ENCODE measurements at regions of chr17 and their contacts with region 1.

Region 1: GRCh38 chr17:44384823-44385286 is 4.6 kb downstream of the ITGA2B start:
- DNase-seq: no peak
- ATAC-seq: no peak
- H3K4me3 ChIP-seq: peak overlapping the region; percentile 82
- H3K27ac ChIP-seq: no peak overlapping the region
- H3K4me1 ChIP-seq: peaks cover 10% of the 10 kb centered on the region
- H3K27me3 ChIP-seq: no peaks in the 10 kb centered on the region
- CTCF ChIP-seq: no peak

Region 2: DNA sequence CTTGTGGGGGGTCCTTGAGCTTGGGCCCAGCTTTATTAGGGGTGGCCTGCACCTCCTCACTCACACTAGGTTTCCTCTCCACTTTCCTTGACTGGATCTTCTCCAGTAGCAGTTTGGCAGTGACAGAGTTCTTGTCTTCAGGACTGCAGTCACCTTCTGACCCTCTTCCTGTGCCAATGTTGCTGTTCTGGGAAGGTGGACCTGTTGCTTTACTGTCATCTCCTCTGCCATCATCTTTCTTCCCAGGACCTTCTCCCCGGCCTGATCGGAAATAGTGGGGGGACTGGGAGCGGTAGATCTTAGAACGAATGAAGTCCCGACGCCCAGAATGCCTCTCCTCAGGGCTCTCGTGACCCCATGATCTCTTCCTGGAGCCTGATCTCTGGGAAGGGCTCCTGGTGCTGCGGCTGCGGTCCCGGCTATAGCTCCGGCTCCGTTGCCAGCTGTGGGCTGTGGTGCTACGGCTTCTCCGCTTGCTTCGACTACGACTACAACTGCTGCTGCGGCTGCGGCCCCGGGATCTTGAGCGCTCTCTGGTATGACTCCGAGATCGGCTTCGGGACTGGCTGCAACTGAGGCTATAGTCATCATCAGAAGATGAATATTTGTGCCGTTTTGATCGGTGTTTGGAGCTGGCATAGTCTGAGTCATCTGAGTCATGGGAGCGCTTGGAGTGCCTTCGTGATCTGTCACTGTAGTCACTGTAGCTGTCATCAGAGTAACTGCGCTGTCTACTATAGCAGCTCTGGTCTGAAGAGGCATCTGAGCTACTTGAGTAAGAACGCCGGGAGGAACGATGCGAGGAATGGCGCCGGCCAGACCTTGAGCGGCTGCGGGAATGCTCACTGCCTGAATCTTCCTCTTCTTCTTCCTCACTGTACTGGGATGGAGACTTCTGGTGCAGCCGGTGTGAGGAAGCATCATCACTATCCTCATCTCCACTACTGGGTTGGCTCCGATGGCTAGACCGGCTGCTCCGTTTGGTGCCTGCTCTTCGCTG is 14.1 kb after region 1 on chr17:
- CTCF ChIA-PET with region 1: no interaction called
- POLR2A ChIA-PET with region 1: no interaction called
- intact Hi-C with region 1: no loop called
- DNase-seq: no peak
- ATAC-seq: no peak
- H3K4me3 ChIP-seq: no peak overlapping the region
- H3K27ac ChIP-seq: no peak overlapping the region
- H3K4me1 ChIP-seq: no peaks in the 10 kb centered on the region
- H3K27me3 ChIP-seq: no peaks in the 10 kb centered on the region
- CTCF ChIP-seq: no peak

Region 3: DNA sequence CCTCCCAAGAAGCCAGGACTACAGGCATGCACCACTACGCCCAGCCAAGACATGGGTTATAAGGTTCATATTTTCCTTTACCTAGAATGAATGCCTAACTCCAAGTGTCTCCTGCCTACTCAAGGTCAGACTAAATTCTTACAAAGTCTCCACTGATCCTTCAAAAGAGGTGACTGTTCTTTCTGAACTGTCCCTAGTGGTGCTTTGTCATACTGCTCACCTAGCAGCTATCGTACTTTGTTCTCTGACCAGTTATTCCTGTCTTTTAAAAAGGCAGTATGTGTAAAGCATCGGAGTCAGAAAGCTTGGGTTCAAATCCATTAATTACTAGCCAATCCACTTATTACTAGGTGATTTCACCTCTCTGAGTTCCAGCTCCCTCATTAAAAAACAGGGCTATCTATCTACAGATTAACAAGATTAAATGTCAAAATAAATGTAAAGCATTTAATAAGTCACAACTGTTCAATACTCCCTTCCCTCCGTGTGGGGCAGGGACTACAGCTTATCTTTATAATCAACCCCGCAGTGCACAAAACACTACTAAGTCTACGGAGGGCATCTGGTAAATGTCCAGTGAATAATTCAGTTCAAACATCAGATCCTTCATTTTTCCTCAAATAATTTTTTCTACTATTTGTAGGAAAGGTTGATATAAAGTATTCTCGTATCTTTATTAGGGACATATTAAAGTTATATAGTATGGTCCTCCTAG is 24.6 kb after region 1 on chr17:
- CTCF ChIA-PET with region 1: no interaction called
- POLR2A ChIA-PET with region 1: interaction called, 12 read pairs
- intact Hi-C with region 1: no loop called
- DNase-seq: peak; percentile 9
- ATAC-seq: no peak
- H3K4me3 ChIP-seq: no peak overlapping the region
- H3K27ac ChIP-seq: no peak overlapping the region
- H3K4me1 ChIP-seq: no peaks in the 10 kb centered on the region
- H3K27me3 ChIP-seq: no peaks in the 10 kb centered on the region
- CTCF ChIP-seq: peak; percentile 40; the same call in 1 of the 2 replicates

Measured in PC-3 (cell line).